Calu3 (cell line): ENCODE measurements at regions of chr1 and their contacts with region 1.

Region 1: GRCh38 chr1:216502528-216503162 is 79.4 kb upstream of the USH2A start:
- DNase-seq: no peak
- H3K4me3 Mint-ChIP-seq: no peak overlapping the region
- H3K27ac Mint-ChIP-seq: no peak overlapping the region
- H3K4me1 Mint-ChIP-seq: peaks cover 14% of the 10 kb centered on the region
- H3K27me3 Mint-ChIP-seq: no peaks in the 10 kb centered on the region
- CTCF ChIP-seq: no peak

Region 2: GRCh38 chr1:216464489-216464888 is 38.2 kb before region 1 on chr1:
- CTCF ChIA-PET with region 1: no interaction called
- intact Hi-C with region 1: loop called (anchors 5 kb)
- DNase-seq: no peak
- H3K4me3 Mint-ChIP-seq: no peak overlapping the region
- H3K27ac Mint-ChIP-seq: no peak overlapping the region
- H3K4me1 Mint-ChIP-seq: peaks cover 9% of the 10 kb centered on the region
- H3K27me3 Mint-ChIP-seq: no peaks in the 10 kb centered on the region
- CTCF ChIP-seq: no peak